ENCODE measurements at regions of chr6 and their contacts with region 1.

Region 1: DNA sequence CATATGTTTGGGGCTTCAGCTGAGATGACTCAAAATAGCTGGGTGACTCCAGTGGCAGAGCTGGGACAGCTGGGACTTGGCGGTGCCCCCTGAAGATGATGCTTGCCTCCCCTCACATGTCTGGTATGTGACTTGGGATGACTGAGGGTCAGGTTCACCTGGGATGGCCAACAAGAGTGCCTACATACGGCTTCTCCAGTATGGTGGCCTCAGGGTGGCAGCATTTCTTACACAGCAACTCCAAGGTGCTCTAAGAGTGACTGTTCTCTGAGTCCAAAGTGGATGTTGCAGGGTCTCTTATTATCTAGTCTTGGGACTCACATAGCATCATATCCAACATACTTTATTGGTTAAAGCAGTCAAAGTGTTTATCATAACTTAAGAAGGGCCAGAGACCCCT is 87.8 kb upstream of the CENPW start:
- DNase-seq: no peak
- H3K4me3 ChIP-seq: no peak overlapping the region
- CTCF ChIP-seq: no peak
- POLR2A ChIP-seq: no peak

Region 2: GRCh38 chr6:126280287-126280686 is 28.1 kb after region 1 on chr6:
- intact Hi-C with region 1: loop called (anchors 2 kb)
- DNase-seq: no peak
- H3K4me3 ChIP-seq: no peak overlapping the region
- CTCF ChIP-seq: no peak
- POLR2A ChIP-seq: no peak

Region 3: GRCh38 chr6:126312013-126312663 is 60.0 kb after region 1 on chr6:
- intact Hi-C with region 1: no loop called
- DNase-seq: no peak
- H3K4me3 ChIP-seq: no peak overlapping the region
- CTCF ChIP-seq: no peak
- POLR2A ChIP-seq: no peak

Measured in lower leg skin (tissue), 4 donors.